ENCODE measurements at regions of chr12 and their contacts with region 1.

Region 1: DNA sequence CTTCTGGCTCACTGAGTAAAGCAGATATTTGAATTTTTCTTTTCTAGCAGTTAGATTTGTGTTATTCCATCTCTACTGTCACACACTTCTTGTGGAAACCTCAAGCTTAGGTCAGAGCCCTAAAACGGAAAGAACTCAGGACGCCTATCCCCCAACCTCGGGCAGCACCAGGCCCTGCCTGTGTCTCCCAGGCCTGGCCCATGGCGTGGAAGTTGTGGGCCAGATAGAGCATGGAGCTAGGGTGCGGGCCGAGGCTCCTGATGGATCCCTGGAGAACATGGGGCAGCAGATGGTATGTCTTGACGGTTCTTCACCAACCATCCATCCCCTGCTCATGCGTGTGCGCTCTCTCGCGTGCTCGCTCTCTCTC is 20.6 kb downstream of the P2RX4 start:
- DNase-seq: no peak
- H3K4me3 Mint-ChIP-seq: no peak overlapping the region
- H3K27ac Mint-ChIP-seq: peak overlapping the region; percentile 49
- H3K4me1 Mint-ChIP-seq: peaks cover 42% of the 10 kb centered on the region
- H3K27me3 Mint-ChIP-seq: no peaks in the 10 kb centered on the region

Region 2: GRCh38 chr12:121170611-121171260 is 59.8 kb before region 1 on chr12:
- CTCF ChIA-PET with region 1: no interaction called
- DNase-seq: no peak
- H3K4me3 Mint-ChIP-seq: no peak overlapping the region
- H3K27ac Mint-ChIP-seq: no peak overlapping the region
- H3K4me1 Mint-ChIP-seq: no peaks in the 10 kb centered on the region
- H3K27me3 Mint-ChIP-seq: no peaks in the 10 kb centered on the region

Region 3: DNA sequence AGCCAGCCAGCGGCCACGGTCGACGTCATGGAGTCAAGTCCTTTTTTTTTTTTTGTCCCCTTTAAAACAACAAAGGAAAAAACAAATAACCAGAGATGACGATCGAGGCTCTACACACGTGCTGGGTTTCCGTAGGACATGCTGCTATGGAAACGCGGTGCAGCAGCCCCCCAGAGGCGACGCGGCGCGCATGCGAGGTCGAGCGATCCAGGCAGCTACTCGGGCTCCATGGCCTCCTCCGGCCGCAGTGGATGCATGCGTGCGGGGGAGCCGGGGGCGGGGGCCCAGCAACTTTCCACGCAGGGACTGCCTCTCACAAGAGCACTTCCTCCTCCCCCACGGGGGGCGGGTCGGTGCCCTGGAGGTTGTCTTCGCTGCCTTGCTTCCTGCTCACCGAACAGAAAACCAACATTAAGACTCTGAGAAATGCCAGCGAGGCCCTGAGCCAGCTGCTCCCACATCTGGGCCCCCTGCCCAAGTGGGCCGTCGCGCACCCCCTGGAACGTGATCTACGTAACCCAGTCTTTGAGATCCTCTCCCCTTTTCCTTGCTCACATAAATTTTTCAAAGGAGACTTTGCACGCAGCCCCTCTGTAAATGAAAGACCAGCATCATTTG is 10.1 kb after region 1 on chr12:
- CTCF ChIA-PET with region 1: interaction called, 19 read pairs
- DNase-seq: peak; percentile 93
- H3K4me3 Mint-ChIP-seq: peak overlapping the region; percentile 63
- H3K27ac Mint-ChIP-seq: peak overlapping the region; percentile 93
- H3K4me1 Mint-ChIP-seq: peaks cover 47% of the 10 kb centered on the region
- H3K27me3 Mint-ChIP-seq: no peaks in the 10 kb centered on the region